Activated CD4-positive, alpha-beta T cell treated with anti-CD3 and anti-CD28 coated beads for 36 hours (primary cell): ENCODE measurements at regions of chr7 and their contacts with region 1.

Region 1: DNA sequence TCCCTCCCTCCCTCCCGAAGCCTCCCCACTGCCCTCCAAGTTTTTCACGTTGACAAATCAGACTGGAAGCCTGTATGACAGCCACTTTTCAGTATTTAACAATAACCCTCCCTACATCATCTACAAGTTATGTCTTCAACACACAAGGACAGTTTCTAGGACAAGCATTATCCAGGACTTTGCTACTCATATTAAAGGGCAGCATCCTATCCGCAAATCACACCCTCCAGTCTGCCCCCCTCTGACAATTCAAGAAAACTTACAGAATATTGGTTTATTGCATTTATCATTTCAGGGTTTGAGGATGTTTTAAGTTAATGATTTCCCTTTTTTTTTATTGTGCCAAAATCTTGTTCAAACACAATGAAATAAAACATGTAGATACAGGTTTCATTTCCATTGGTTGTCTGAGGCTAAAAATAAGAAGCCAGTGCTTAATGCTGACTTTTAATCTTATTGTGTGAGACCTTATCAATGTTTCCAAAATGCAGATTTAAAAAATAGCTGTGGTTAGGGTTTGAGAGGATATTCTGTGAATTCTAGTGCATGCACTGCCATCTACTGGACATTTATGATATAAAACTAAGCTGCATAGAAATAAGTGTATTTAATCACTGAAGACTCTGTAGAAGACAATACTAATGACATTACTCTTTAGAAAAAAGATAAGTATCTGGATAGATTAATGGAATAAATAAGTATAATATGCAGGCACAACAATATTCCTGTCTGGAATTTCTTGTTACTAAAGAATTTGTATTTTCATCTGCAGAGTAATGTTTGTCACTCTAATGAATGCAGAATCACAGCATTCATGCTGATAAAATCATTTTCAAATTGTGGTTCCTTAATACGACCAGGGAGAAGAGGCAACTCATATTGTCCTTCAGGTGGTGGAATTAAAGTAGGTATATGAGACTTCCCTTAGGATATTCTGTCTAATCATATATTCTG is 64.1 kb downstream of the CAV1 start:
- DNase-seq: no peak
- ATAC-seq: peak; percentile 13
- H3K4me3 Mint-ChIP-seq: no peak overlapping the region
- H3K27ac Mint-ChIP-seq: peak overlapping the region; percentile 39
- H3K4me1 Mint-ChIP-seq: peaks cover 24% of the 10 kb centered on the region
- H3K27me3 Mint-ChIP-seq: peaks cover 18% of the 10 kb centered on the region

Region 2: GRCh38 chr7:116138202-116138801 is 450.6 kb before region 1 on chr7:
- CTCF ChIA-PET with region 1: interaction called, 3 read pairs
- POLR2A ChIA-PET with region 1: no interaction called
- intact Hi-C with region 1: loop called (anchors 1 kb)
- DNase-seq: peak; percentile 11
- ATAC-seq: peak; percentile 91
- H3K4me3 Mint-ChIP-seq: no peak overlapping the region
- H3K27ac Mint-ChIP-seq: no peak overlapping the region
- H3K4me1 Mint-ChIP-seq: peaks cover 9% of the 10 kb centered on the region
- H3K27me3 Mint-ChIP-seq: no peaks in the 10 kb centered on the region

Region 3: GRCh38 chr7:116236020-116236630 is 352.8 kb before region 1 on chr7:
- CTCF ChIA-PET with region 1: interaction called, 12 read pairs
- POLR2A ChIA-PET with region 1: no interaction called
- intact Hi-C with region 1: loop called in 1 of 2 experiments (anchors 5 kb)
- DNase-seq: peak; percentile 66
- ATAC-seq: no peak
- H3K4me3 Mint-ChIP-seq: no peak overlapping the region
- H3K27ac Mint-ChIP-seq: no peak overlapping the region
- H3K4me1 Mint-ChIP-seq: peaks cover 70% of the 10 kb centered on the region
- H3K27me3 Mint-ChIP-seq: no peaks in the 10 kb centered on the region

Region 4: GRCh38 chr7:116525913-116526861 is 62.7 kb before region 1 on chr7:
- CTCF ChIA-PET with region 1: interaction called, 6 read pairs
- POLR2A ChIA-PET with region 1: no interaction called
- intact Hi-C with region 1: loop called (anchors 1 to 5 kb)
- DNase-seq: peak; percentile 80
- ATAC-seq: peak; percentile 96
- H3K4me3 Mint-ChIP-seq: peak overlapping the region; percentile 71
- H3K27ac Mint-ChIP-seq: no peak overlapping the region
- H3K4me1 Mint-ChIP-seq: peaks cover 20% of the 10 kb centered on the region
- H3K27me3 Mint-ChIP-seq: peaks cover 59% of the 10 kb centered on the region

Region 5: GRCh38 chr7:116653204-116653603 is 64.3 kb after region 1 on chr7:
- CTCF ChIA-PET with region 1: interaction called, 11 read pairs
- POLR2A ChIA-PET with region 1: no interaction called
- intact Hi-C with region 1: no loop called
- DNase-seq: no peak
- ATAC-seq: peak; percentile 68
- H3K4me3 Mint-ChIP-seq: no peak overlapping the region
- H3K27ac Mint-ChIP-seq: no peak overlapping the region
- H3K4me1 Mint-ChIP-seq: peaks cover 5% of the 10 kb centered on the region
- H3K27me3 Mint-ChIP-seq: peaks cover 12% of the 10 kb centered on the region

Region 6: GRCh38 chr7:116809636-116810266 is 220.8 kb after region 1 on chr7:
- CTCF ChIA-PET with region 1: interaction called, 19 read pairs
- POLR2A ChIA-PET with region 1: no interaction called
- intact Hi-C with region 1: loop called (anchors 1 kb)
- DNase-seq: no peak
- ATAC-seq: peak; percentile 69
- H3K4me3 Mint-ChIP-seq: no peak overlapping the region
- H3K27ac Mint-ChIP-seq: no peak overlapping the region
- H3K4me1 Mint-ChIP-seq: no peaks in the 10 kb centered on the region
- H3K27me3 Mint-ChIP-seq: peaks cover 3% of the 10 kb centered on the region